ENCODE measurements at regions of chr7 and their contacts with region 1.

Region 1: DNA sequence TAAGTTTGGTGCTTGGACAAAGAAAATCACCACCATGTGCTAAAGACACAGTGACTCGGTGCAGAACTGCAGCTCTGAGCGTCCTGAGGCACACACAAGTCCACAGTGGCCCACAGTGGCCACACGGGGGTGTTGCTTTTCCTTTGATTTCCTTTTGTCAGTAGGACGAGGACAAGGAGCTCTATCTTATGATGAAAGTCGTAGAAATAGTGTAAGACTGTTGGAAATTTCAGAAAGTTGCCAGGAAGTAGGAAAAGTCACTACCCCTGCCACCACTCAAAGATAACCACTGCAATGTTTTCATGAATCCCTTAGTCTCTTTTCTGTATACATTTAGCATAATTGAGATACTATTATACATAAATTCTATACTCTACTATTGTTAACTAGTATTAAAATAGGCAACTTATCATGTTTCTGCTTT is 146.0 kb downstream of the TNS3 start:
- DNase-seq: peak; percentile 66
- H3K4me3 ChIP-seq: no peak overlapping the region
- H3K27ac ChIP-seq: no peak overlapping the region
- H3K4me1 ChIP-seq: no peaks in the 10 kb centered on the region
- CTCF ChIP-seq: peak; percentile 78

Region 2: GRCh38 chr7:47266131-47266706 is 169.7 kb before region 1 on chr7:
- CTCF ChIA-PET with region 1: no interaction called
- POLR2A ChIA-PET with region 1: no interaction called
- intact Hi-C with region 1: loop called (anchors 5 kb)
- DNase-seq: peak; percentile 67
- H3K4me3 ChIP-seq: no peak overlapping the region
- H3K27ac ChIP-seq: no peak overlapping the region
- H3K4me1 ChIP-seq: no peaks in the 10 kb centered on the region
- CTCF ChIP-seq: peak; percentile 98

Region 3: GRCh38 chr7:47539398-47540052 is 103.6 kb after region 1 on chr7:
- CTCF ChIA-PET with region 1: no interaction called
- POLR2A ChIA-PET with region 1: no interaction called
- intact Hi-C with region 1: no loop called
- DNase-seq: no peak
- H3K4me3 ChIP-seq: no peak overlapping the region
- H3K27ac ChIP-seq: no peak overlapping the region
- H3K4me1 ChIP-seq: peaks cover 12% of the 10 kb centered on the region
- CTCF ChIP-seq: no peak